ENCODE measurements at regions of chr5 and their contacts with region 1.

Region 1: DNA sequence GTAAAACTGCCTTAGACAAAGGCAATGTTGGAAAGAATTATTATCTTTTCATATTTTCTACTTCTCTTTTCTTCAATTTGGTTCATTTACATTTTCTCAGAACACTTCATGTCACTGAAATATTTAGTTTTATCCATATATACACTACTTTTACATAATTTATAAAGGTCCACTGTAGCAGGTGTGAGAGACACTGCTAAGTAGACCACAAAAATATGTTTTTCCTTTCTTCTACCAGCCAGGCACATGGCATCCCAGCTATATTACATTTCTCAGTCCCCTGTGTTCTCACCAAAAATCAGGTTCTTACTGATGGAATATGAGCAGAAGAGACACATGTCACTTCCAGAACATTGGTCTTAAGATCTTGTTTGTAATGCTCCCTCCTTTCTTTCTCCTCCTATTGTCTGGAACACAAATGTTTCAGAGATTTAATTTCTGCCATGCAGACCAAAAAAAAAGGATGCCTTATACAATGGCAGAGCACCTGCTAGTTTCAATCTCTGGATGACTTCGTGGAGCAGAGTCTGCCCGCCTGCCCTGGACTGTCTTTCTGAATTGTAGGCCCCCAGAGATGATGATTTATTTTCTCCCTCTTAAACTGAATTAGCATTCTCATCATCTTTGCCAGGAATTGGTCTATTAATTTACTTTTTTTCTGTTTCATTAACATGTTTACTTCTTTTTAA is 125.4 kb upstream of the ACOT12 start:
- DNase-seq: peak; percentile 72
- H3K4me3 ChIP-seq: peak overlapping the region; percentile 10
- H3K27ac ChIP-seq: peak overlapping the region; percentile 83
- H3K4me1 ChIP-seq: peaks cover 57% of the 10 kb centered on the region
- CTCF ChIP-seq: no peak

Region 2: DNA sequence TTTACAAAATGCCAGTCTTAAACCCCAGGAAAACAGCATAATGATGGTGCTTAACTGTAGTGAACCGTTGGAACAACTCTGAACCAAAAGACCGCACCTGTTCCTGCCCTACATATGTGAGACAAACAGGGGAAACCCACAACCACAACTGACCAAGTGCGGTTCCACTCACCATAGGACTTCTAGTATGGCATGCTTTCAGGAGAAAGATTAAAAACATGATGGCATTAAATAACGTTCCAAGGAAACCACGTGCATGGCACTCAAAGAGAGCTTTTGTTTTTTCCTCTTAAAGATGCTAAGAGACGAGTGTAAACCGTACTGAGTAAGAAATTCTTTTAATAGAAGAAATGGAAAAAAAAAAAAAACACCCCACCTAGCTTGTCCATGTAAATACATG is 111.8 kb after region 1 on chr5:
- CTCF ChIA-PET with region 1: no interaction called
- POLR2A ChIA-PET with region 1: no interaction called
- intact Hi-C with region 1: loop called (anchors 2 kb)
- DNase-seq: peak; percentile 84
- H3K4me3 ChIP-seq: peak overlapping the region; percentile 24
- H3K27ac ChIP-seq: peak overlapping the region; percentile 77
- H3K4me1 ChIP-seq: peaks cover 60% of the 10 kb centered on the region
- CTCF ChIP-seq: no peak

Measured in OCI-LY7 (cell line).